CD8-positive, alpha-beta T cell (primary cell): ENCODE measurements at regions of chr1 and their contacts with region 1.

Region 1: DNA sequence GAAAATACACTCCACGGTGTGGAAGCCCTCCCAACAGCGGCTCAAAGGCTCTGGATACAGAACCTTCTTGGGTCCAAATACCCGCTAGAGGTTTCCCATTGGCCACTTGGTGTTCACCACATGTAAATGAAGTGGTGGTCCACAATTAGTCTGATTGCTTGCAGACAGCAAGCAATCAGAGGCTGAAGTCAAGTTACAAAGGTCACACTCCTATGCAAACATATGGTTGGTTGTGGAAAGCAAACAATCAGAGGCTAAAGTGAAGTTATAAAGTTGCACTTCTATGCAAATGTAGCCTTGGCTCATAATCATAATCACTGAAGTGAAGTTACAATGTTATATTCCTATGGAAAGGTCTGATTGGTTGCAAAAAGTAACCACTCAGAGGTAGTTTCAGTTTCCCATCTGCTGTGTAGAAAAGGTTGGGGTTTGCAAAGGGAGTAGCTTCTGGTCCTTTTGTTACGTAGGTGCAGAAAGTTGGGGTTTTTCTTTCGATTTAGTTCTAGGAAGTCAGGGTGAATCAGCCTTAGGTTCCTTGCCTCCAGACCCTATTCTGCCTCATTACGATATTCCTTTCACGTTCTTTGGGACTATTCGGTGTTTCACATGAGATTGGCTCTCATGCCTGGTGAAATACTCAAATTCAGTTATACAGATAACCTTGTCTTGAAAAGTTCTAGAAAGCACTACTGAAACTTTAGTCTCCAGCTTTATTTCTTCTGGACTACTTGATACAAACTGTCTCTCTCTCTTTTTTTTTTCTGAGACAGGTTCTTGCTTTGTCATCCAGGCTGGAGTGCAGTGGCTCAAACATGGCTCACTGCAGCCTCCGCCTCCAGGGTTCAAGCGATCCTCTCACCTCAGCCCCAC is 36.7 kb upstream of the MTF2 start:
- DNase-seq: peak in 6 of 9 experiments; percentile 11 to 92 (median 20)
- ATAC-seq: peak; percentile 99
- H3K4me3 ChIP-seq: peak overlapping the region; percentile 32 to 44
- H3K4me3 Mint-ChIP-seq: peak overlapping the region; percentile 83
- H3K27ac ChIP-seq: peak overlapping the region; percentile 40 to 93
- H3K27ac Mint-ChIP-seq: peak overlapping the region; percentile 95
- H3K4me1 ChIP-seq: peaks cover 12% of the 10 kb centered on the region
- H3K4me1 Mint-ChIP-seq: peaks cover 13% of the 10 kb centered on the region
- H3K27me3 ChIP-seq: no peaks in the 10 kb centered on the region
- H3K27me3 Mint-ChIP-seq: no peaks in the 10 kb centered on the region
- CTCF ChIP-seq: no peak

Region 2: DNA sequence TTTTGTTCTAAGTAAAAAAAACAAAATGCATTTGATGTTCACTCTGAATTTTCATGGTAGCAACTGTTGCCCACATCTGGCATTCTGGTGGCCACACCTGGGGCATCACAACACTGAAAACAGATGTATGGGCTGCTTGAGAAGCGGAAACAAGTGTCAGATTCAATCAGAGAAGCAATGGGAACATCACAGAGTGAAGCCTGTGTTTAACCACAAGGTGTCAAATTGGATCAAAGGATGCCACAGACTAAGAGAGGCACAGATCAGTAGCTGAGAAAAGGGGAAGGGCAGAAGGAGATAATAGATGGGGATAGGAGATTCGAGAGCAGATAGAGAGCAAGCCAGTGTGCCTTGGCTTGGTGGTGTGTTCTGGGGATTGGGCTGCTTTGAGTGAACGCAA is 13.1 kb before region 1 on chr1:
- CTCF ChIA-PET with region 1: interaction called, 3 read pairs
- POLR2A ChIA-PET with region 1: interaction called, 3 read pairs
- intact Hi-C with region 1: loop called in 1 of 2 experiments (anchors 2 kb)
- DNase-seq: peak in 6 of 9 experiments; percentile 15 to 79 (median 46)
- ATAC-seq: peak; percentile 91
- H3K4me3 ChIP-seq: no peak overlapping the region
- H3K4me3 Mint-ChIP-seq: peak overlapping the region; percentile 13
- H3K27ac ChIP-seq: no peak overlapping the region
- H3K27ac Mint-ChIP-seq: peak overlapping the region; percentile 60
- H3K4me1 ChIP-seq: peaks cover 13% of the 10 kb centered on the region
- H3K4me1 Mint-ChIP-seq: peaks cover 14% of the 10 kb centered on the region
- H3K27me3 ChIP-seq: no peaks in the 10 kb centered on the region
- H3K27me3 Mint-ChIP-seq: peaks cover 7% of the 10 kb centered on the region
- CTCF ChIP-seq: no peak